ENCODE measurements at regions of chr14 and their contacts with region 1.

Region 1: DNA sequence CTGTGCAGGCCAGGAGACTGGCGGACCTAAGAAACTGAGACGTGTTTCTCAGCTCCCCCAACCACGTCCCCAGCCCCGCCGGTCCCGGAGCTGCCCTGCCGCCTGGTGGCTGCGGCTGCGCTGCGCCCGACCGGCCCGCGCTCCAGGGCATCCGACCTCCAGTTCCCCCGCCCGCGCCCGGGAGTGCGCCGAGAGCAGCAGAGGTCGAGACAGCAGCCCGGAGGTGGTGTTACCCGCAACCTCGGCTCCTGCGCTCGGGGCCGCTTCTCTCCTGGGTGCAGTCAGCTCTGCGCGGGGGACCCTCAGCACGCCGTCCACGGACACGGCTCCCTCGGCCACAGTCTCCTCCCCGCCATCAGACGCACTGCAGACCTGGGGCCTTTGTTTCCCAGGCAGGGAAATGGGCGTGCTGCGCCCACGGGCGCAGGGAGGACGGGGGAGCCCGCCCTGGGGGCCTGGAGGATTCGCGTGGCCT is 21.6 kb upstream of the GPR132 start:
- DNase-seq: peak; percentile 71 to 96 (median 87)
- ATAC-seq: peak; percentile 87
- H3K4me3 ChIP-seq: peak overlapping the region; percentile 59 to 65
- H3K4me3 Mint-ChIP-seq: peak overlapping the region; percentile 78
- H3K27ac ChIP-seq: peak overlapping the region in 1 of 2 experiments; percentile 43
- H3K27ac Mint-ChIP-seq: peak overlapping the region; percentile 77
- H3K4me1 ChIP-seq: peaks cover 36% of the 10 kb centered on the region
- H3K4me1 Mint-ChIP-seq: peaks cover 9% of the 10 kb centered on the region
- H3K27me3 ChIP-seq: no peaks in the 10 kb centered on the region
- H3K27me3 Mint-ChIP-seq: no peaks in the 10 kb centered on the region
- CTCF ChIP-seq: peak; percentile 83

Region 2: DNA sequence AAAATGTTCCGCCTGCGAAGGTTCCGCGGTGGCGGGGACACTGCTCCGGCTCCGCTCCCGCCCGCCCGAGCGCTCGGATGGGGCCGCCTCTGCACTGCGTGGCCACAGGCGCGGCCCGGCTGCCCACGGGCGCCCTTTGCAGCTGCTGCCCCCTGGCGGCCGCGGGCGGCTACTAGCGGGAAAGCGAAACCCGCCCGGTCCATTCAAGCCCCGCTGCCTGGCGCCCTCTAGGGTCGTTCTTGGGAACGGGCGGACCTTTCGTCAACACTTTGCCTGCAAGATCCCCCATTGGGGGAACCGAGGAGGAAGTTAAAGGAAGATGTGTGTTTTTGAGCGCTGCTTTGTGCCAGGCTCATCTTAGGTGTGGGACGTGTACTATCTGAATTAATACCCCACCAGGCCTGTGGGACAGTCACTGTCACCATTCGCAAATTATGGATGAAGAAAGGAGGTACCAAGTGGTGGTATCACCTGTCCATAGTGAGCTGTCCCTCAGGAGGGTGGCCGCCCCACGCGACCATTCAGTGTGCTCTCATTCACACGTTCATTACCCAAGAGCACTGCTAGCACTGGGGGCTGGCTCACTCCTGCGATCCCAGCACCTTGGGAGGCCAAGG is 41.1 kb before region 1 on chr14:
- CTCF ChIA-PET with region 1: interaction called, 67 read pairs
- POLR2A ChIA-PET with region 1: interaction called, 10 read pairs
- intact Hi-C with region 1: loop called (anchors 1 to 5 kb)
- DNase-seq: peak; percentile 86 to 98 (median 93)
- ATAC-seq: peak; percentile 90
- H3K4me3 ChIP-seq: no peak overlapping the region
- H3K4me3 Mint-ChIP-seq: no peak overlapping the region
- H3K27ac ChIP-seq: no peak overlapping the region
- H3K27ac Mint-ChIP-seq: peak overlapping the region; percentile 83
- H3K4me1 ChIP-seq: peaks cover 5% of the 10 kb centered on the region
- H3K4me1 Mint-ChIP-seq: peaks cover 9% of the 10 kb centered on the region
- H3K27me3 ChIP-seq: no peaks in the 10 kb centered on the region
- H3K27me3 Mint-ChIP-seq: no peaks in the 10 kb centered on the region
- CTCF ChIP-seq: peak; percentile 100

Region 3: DNA sequence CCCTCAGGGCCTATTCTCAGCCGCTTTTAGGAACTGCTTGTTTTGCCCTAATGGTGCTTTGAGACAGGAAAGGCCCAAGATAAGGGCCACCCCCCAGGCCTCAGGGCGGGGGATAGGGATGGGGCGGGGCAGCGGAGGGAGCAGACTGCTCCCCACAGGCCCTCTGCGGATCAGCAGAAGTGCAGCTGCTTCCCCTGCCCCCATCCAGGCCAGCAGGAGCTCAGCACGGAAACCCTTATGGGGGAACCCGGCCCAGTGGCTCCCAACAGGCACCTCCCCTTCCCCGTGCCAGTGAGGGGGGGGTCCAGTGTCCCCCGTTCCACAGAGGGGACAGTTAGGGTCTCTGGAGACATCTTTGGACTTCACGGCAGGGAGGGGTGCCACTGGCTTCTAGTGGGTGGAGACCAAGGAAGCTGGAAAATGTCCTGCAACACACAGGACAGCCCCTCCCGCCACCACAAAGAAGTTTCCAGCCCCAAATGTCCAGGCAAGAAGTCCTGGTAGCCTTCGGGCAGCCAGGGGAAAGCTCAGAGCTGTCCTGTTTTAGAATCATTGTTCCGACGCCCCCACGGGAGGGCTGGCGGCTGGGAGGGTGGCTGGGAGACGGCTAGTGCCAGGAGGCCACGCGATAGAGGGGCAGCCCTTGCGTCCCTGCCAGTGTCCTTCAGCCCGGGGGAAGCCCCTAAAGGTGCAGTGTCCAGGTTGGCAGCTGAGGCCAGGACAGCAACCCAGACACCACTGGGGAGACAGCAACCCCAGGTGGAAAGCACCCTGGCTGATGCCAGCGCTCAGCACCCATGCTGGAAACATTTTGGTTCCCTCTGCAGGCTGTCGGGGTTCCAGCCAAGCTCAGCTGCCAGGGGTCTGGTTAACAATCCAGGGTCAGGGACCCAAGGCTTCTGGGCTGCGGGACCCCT is 11.2 kb before region 1 on chr14:
- CTCF ChIA-PET with region 1: interaction called, 105 read pairs
- POLR2A ChIA-PET with region 1: interaction called, 13 read pairs
- intact Hi-C with region 1: no loop called
- DNase-seq: peak in 4 of 9 experiments; percentile 28 to 64 (median 40)
- ATAC-seq: peak; percentile 54
- H3K4me3 ChIP-seq: no peak overlapping the region
- H3K4me3 Mint-ChIP-seq: peak overlapping the region; percentile 29
- H3K27ac ChIP-seq: peak overlapping the region in 1 of 2 experiments; percentile 25
- H3K27ac Mint-ChIP-seq: peak overlapping the region; percentile 82
- H3K4me1 ChIP-seq: peaks cover 39% of the 10 kb centered on the region
- H3K4me1 Mint-ChIP-seq: peaks cover 53% of the 10 kb centered on the region
- H3K27me3 ChIP-seq: no peaks in the 10 kb centered on the region
- H3K27me3 Mint-ChIP-seq: no peaks in the 10 kb centered on the region
- CTCF ChIP-seq: no peak

Region 4: GRCh38 chr14:105203057-105203531 is 116.2 kb after region 1 on chr14:
- CTCF ChIA-PET with region 1: interaction called, 3 read pairs
- POLR2A ChIA-PET with region 1: no interaction called
- intact Hi-C with region 1: loop called in 1 of 2 experiments (anchors 5 kb)
- DNase-seq: peak; percentile 34 to 77 (median 63)
- ATAC-seq: peak; percentile 45
- H3K4me3 ChIP-seq: no peak overlapping the region
- H3K4me3 Mint-ChIP-seq: no peak overlapping the region
- H3K27ac ChIP-seq: no peak overlapping the region
- H3K27ac Mint-ChIP-seq: no peak overlapping the region
- H3K4me1 ChIP-seq: peaks cover 25% of the 10 kb centered on the region
- H3K4me1 Mint-ChIP-seq: peaks cover 18% of the 10 kb centered on the region
- H3K27me3 ChIP-seq: peaks cover 0 to 10% of the 10 kb centered on the region in 2 experiments
- H3K27me3 Mint-ChIP-seq: peaks cover 22% of the 10 kb centered on the region
- CTCF ChIP-seq: peak; percentile 93

Region 5: GRCh38 chr14:105351920-105352851 is 265.3 kb after region 1 on chr14:
- CTCF ChIA-PET with region 1: interaction called, 19 read pairs
- POLR2A ChIA-PET with region 1: interaction called, 3 read pairs
- intact Hi-C with region 1: loop called (anchors 1 kb)
- DNase-seq: peak; percentile 80 to 93 (median 87)
- ATAC-seq: peak; percentile 99
- H3K4me3 ChIP-seq: no peak overlapping the region
- H3K4me3 Mint-ChIP-seq: no peak overlapping the region
- H3K27ac ChIP-seq: no peak overlapping the region
- H3K27ac Mint-ChIP-seq: no peak overlapping the region
- H3K4me1 ChIP-seq: peaks cover 4% of the 10 kb centered on the region
- H3K4me1 Mint-ChIP-seq: peaks cover 3% of the 10 kb centered on the region
- H3K27me3 ChIP-seq: no peaks in the 10 kb centered on the region
- H3K27me3 Mint-ChIP-seq: no peaks in the 10 kb centered on the region
- CTCF ChIP-seq: peak; percentile 76

Region 6: DNA sequence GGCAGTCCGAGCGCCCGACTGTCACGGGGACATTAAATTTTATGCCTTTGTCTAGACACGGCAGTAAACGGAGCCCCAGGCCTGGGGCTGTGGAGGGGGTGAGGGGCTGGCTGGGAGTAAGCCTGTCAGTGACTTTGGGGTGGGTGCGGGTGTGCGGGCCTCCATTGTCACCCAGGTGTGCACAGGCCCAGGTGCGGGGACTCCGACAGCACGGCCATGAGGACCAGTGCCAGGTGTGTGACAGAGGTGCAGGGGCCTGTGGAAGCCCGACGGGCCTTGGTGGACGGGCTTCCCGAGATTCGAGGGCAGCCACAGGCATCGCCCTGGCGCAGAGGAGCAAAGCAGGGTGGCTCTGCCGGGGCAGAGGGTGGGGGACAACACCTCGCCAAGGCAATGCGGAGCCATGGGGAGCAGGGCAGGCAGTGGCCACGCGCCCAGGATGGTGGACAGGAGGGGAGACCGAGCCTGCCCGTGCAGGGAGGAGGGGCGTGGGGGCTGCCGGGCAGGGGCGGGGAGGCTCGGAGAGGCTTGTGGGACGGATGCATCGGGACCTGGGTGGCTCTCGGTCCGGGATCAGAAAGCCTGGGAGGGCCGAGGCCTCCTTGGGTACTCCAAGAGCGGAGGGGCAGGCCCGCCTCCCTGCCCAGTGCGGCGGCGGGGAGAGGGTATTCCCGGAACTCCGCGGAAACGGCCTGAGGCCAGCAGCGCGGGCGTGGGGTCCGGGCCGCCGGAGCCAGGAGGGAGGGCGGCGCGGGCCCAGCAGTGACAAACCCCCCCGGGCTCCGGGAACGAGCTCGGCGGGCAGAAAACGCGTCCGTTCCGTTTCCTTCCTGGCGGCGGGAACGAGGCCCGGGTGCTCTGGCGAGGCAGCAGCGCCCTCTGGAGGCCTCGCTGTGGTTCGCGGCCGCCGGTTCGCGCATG is 441.1 kb after region 1 on chr14:
- CTCF ChIA-PET with region 1: no interaction called
- POLR2A ChIA-PET with region 1: no interaction called
- intact Hi-C with region 1: loop called in 1 of 2 experiments (anchors 5 kb)
- DNase-seq: peak; percentile 66 to 89 (median 79)
- ATAC-seq: peak; percentile 69
- H3K4me3 ChIP-seq: peak overlapping the region; percentile 38 to 66
- H3K4me3 Mint-ChIP-seq: peak overlapping the region; percentile 75
- H3K27ac ChIP-seq: no peak overlapping the region
- H3K27ac Mint-ChIP-seq: no peak overlapping the region
- H3K4me1 ChIP-seq: peaks cover 32% of the 10 kb centered on the region
- H3K4me1 Mint-ChIP-seq: peaks cover 18% of the 10 kb centered on the region
- H3K27me3 ChIP-seq: peaks cover 4 to 24% of the 10 kb centered on the region in 2 experiments
- H3K27me3 Mint-ChIP-seq: peaks cover 7% of the 10 kb centered on the region
- CTCF ChIP-seq: peak; percentile 73

Measured in CD8-positive, alpha-beta T cell (primary cell).